Esophagus muscularis mucosa (tissue), 4 donors: ENCODE measurements at regions of chr3 and their contacts with region 1.

Region 1: DNA sequence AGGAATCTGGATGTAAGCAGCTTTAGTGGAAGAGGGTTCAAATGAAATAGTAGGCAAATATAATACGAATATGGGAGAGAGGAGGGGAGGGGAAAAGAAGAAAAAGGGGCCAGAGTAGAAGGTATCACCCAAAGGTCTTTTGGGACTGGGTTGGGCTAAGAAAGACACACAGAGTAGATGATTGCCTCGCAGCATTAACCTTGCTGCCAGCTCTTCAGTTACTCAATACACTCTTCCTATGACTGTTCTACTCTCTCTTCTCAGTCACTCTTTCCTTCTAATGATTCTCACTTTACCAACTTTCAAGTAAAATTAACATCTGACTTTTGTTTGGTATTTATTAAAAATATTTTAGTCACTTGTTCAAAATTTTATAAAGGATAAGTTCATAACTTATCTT is 52.8 kb downstream of the CLASP2 start:
- DNase-seq: no peak
- H3K4me3 ChIP-seq: no peak overlapping the region
- H3K27ac ChIP-seq: no peak overlapping the region
- H3K4me1 ChIP-seq: peaks cover 2 to 6% (median 3%) of the 10 kb centered on the region in 4 donors
- H3K27me3 ChIP-seq: no peaks in the 10 kb centered on the region
- CTCF ChIP-seq: no peak
- EP300 ChIP-seq: no peak
- POLR2A ChIP-seq: no peak

Region 2: DNA sequence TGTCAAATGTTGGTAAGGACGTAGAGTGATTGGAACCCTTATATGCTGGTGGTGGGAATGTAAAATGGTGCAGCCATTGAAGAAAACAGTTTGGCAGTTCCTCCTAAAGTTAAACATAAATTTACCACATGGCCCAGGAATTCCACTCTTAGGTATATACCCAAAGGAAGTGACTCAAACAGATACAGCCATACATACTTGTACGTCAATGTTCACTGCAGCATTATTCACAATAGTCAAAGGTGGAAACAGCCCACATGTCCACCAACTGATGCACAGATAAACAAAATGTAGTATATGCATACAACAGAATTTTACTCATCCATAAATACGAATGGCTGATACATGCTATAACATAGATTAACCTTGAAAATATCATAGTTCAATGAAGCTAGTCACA is 39.6 kb after region 1 on chr3:
- intact Hi-C with region 1: loop called (anchors 5 kb)
- DNase-seq: no peak
- H3K4me3 ChIP-seq: no peak overlapping the region
- H3K27ac ChIP-seq: no peak overlapping the region
- H3K4me1 ChIP-seq: no peaks in the 10 kb centered on the region
- H3K27me3 ChIP-seq: no peaks in the 10 kb centered on the region
- CTCF ChIP-seq: no peak
- EP300 ChIP-seq: no peak
- POLR2A ChIP-seq: no peak